CD8-positive, alpha-beta T cell (primary cell): ENCODE measurements at regions of chr4 and their contacts with region 1.

Region 1: GRCh38 chr4:67545199-67546003 is at the start of gene CENPC:
- DNase-seq: peak; percentile 81 to 96 (median 91)
- ATAC-seq: peak; percentile 85
- H3K4me3 ChIP-seq: peak within 1 kb of the TSS; percentile 87 to 93
- H3K4me3 Mint-ChIP-seq: peak within 1 kb of the TSS; percentile 97
- H3K27ac ChIP-seq: peak within 1 kb of the TSS; percentile 96 to 98
- H3K27ac Mint-ChIP-seq: peak within 1 kb of the TSS; percentile 100
- H3K4me1 ChIP-seq: peaks cover 3% of the 10 kb centered on the region
- H3K4me1 Mint-ChIP-seq: peaks cover 47% of the 10 kb centered on the region
- H3K27me3 ChIP-seq: no peaks in the 10 kb centered on the region
- H3K27me3 Mint-ChIP-seq: no peaks in the 10 kb centered on the region
- CTCF ChIP-seq: no peak
- total RNA-seq, gene CENPC: 134 to 143 TPM

Region 2: GRCh38 chr4:67581208-67581857 is 35.9 kb after region 1 on chr4:
- CTCF ChIA-PET with region 1: no interaction called
- POLR2A ChIA-PET with region 1: interaction called, 4 read pairs
- intact Hi-C with region 1: loop called in 1 of 2 experiments (anchors 5 kb)
- DNase-seq: peak in 2 of 9 experiments; percentile 50 to 79
- ATAC-seq: peak; percentile 91
- H3K4me3 ChIP-seq: no peak overlapping the region
- H3K4me3 Mint-ChIP-seq: peak overlapping the region; percentile 57
- H3K27ac ChIP-seq: no peak overlapping the region
- H3K27ac Mint-ChIP-seq: peak overlapping the region; percentile 37
- H3K4me1 ChIP-seq: peaks cover 22% of the 10 kb centered on the region
- H3K4me1 Mint-ChIP-seq: peaks cover 40% of the 10 kb centered on the region
- H3K27me3 ChIP-seq: no peaks in the 10 kb centered on the region
- H3K27me3 Mint-ChIP-seq: no peaks in the 10 kb centered on the region
- CTCF ChIP-seq: no peak

Region 3: DNA sequence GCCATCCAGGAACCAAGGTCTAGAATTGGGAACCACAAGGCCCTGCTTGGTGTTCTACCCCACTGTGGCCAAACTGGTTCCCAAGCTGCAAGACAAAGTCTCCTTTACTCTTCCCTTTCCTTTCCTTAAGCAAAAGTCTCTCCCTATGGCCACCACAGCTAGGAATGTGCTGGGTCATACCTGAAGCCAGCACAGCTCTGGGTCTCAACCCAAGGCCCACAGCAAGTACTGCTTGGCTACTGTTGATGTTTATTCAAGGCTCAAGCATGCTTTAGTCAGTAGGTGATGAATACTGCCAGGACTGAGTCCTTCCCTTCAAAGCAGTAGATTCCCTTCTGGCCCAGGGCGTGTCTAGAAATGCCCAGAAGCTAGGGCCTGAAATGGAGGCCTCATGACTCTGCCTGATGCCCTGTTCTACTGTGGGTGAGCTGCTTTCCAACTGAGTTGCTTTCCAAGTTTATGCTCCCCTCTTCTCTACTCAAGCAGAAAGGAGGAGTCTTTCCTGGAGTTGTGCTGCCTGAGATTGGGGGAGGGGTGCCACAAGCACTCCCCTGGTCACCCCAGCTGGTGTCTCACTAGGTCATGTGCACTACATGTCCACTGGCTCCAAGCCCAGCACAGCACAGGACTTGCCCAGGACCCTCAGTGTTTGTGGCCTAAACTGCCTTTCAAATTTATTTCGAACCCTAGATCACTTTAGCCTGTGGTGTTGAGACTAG is 58.1 kb after region 1 on chr4:
- CTCF ChIA-PET with region 1: no interaction called
- POLR2A ChIA-PET with region 1: no interaction called
- intact Hi-C with region 1: no loop called
- DNase-seq: no peak
- ATAC-seq: no peak
- H3K4me3 ChIP-seq: no peak overlapping the region
- H3K4me3 Mint-ChIP-seq: no peak overlapping the region
- H3K27ac ChIP-seq: no peak overlapping the region
- H3K27ac Mint-ChIP-seq: no peak overlapping the region
- H3K4me1 ChIP-seq: no peaks in the 10 kb centered on the region
- H3K4me1 Mint-ChIP-seq: no peaks in the 10 kb centered on the region
- H3K27me3 ChIP-seq: no peaks in the 10 kb centered on the region
- H3K27me3 Mint-ChIP-seq: peaks cover 4% of the 10 kb centered on the region
- CTCF ChIP-seq: no peak

Region 4: GRCh38 chr4:67700738-67701516 is 155.5 kb after region 1 on chr4 and contains the start of gene UBA6:
- CTCF ChIA-PET with region 1: interaction called, 3 read pairs
- POLR2A ChIA-PET with region 1: interaction called, 5 read pairs
- intact Hi-C with region 1: loop called (anchors 1 to 2 kb)
- DNase-seq: peak; percentile 85 to 97 (median 95)
- ATAC-seq: peak; percentile 96
- H3K4me3 ChIP-seq: peak within 1 kb of the TSS; percentile 77 to 84
- H3K4me3 Mint-ChIP-seq: peak within 1 kb of the TSS; percentile 98
- H3K27ac ChIP-seq: peak within 1 kb of the TSS; percentile 78 to 79
- H3K27ac Mint-ChIP-seq: peak within 1 kb of the TSS; percentile 97
- H3K4me1 ChIP-seq: peaks cover 17% of the 10 kb centered on the region
- H3K4me1 Mint-ChIP-seq: peaks cover 70% of the 10 kb centered on the region
- H3K27me3 ChIP-seq: no peaks in the 10 kb centered on the region
- H3K27me3 Mint-ChIP-seq: no peaks in the 10 kb centered on the region
- CTCF ChIP-seq: peak; percentile 39
- total RNA-seq, gene UBA6: 35.9 to 44.7 TPM

Region 5: DNA sequence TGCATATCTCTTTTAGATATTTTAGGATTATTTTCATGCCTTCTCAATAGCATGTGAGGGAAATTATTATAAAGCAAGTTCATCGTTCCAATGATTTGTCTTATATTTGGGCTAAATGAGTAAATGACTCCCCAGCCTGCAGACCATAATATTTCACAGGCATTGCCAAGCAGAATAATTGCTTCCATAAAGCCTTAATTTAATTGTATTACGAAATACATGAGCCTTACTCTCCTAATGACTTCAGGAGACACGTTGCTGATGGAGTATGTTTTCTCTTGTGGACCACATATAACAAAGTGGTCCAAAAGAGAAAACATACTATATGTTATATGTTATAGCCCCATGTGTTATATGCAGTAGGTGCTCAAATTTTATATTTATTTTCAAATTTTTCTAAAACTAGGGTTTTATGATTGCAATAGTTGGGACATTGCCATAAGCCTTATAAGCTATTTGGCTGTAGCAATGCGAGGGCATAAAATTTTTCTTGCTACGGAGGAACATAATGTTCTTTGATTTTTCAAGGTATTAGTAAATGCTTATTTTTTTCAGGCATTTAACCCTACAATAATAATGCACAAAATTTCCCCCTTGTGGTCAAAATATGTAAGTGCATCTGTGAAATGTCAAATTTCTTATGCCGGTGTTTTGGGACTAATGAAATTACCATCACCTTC is 364.6 kb after region 1 on chr4:
- CTCF ChIA-PET with region 1: interaction called, 9 read pairs
- POLR2A ChIA-PET with region 1: no interaction called
- intact Hi-C with region 1: loop called in 1 of 2 experiments (anchors 2 kb)
- DNase-seq: peak in 2 of 9 experiments; percentile 16 to 33
- ATAC-seq: no peak
- H3K4me3 ChIP-seq: no peak overlapping the region
- H3K4me3 Mint-ChIP-seq: no peak overlapping the region
- H3K27ac ChIP-seq: no peak overlapping the region
- H3K27ac Mint-ChIP-seq: no peak overlapping the region
- H3K4me1 ChIP-seq: no peaks in the 10 kb centered on the region
- H3K4me1 Mint-ChIP-seq: no peaks in the 10 kb centered on the region
- H3K27me3 ChIP-seq: no peaks in the 10 kb centered on the region
- H3K27me3 Mint-ChIP-seq: no peaks in the 10 kb centered on the region
- CTCF ChIP-seq: peak; percentile 80

Region 6: DNA sequence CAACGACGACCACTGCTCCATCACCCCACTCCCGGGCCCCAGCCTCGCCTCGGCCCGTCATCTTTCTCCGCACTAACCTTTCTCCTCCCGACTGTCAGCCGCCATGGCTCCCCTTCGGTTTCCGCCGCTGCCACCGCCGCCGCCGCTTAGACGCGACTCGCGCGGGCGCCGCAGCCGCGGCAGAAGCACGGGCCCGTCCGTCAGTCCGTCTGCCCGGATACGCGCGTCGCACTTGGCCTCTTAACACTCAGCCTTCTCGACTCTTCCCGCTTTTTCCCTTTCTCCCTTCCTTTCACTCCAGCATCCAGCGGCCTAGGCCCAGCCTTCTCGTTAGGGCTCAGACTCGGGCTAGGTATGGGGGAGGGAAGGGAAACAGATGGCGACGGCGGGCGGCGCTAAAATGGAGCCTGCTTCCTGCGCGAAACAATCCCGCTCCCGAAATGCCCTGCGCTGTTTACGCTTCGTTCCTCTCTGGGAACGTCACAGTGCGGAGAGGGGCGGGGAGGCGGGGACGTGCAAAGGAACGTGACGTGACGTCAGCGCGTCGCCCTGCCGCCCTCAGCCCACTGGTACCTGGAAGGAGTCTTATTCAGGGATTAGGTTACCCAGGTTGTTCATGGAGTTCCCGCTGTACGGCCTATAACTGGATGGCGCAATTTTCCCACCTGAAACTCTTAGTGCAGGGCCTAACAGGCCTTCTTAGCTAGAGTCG is 804.4 kb after region 1 on chr4 and contains the start of gene YTHDC1:
- CTCF ChIA-PET with region 1: no interaction called
- POLR2A ChIA-PET with region 1: no interaction called
- intact Hi-C with region 1: loop called (anchors 10 kb)
- DNase-seq: peak; percentile 92 to 99 (median 96)
- ATAC-seq: peak; percentile 95
- H3K4me3 ChIP-seq: peak within 1 kb of the TSS; percentile 86 to 97
- H3K4me3 Mint-ChIP-seq: peak within 1 kb of the TSS; percentile 94
- H3K27ac ChIP-seq: peak within 1 kb of the TSS; percentile 95 to 96
- H3K27ac Mint-ChIP-seq: peak within 1 kb of the TSS; percentile 100
- H3K4me1 ChIP-seq: peaks cover 33% of the 10 kb centered on the region
- H3K4me1 Mint-ChIP-seq: peaks cover 38% of the 10 kb centered on the region
- H3K27me3 ChIP-seq: no peaks in the 10 kb centered on the region
- H3K27me3 Mint-ChIP-seq: no peaks in the 10 kb centered on the region
- CTCF ChIP-seq: no peak
- total RNA-seq, gene YTHDC1: 392 to 396 TPM